Activated T-helper 1 cell treated with anti-CD3 and anti-CD28 coated beads, Interleukin-12 subunit alpha, Interleukin-12 subunit beta, Interleukin-2, Interleukin-4 antibody, amounts not matched to agents 30 ng/mL and 10 ng/mL and 1 ng/mL, durations not matched to agents 14 hours and 24 hours and 36 hours (primary cell): ENCODE measurements at regions of chr14 and their contacts with region 1.

Region 1: GRCh38 chr14:54440873-54441868 is at the start of gene CNIH1:
- DNase-seq: peak; percentile 91
- H3K4me3 Mint-ChIP-seq: peak within 1 kb of the TSS; percentile 89
- H3K27ac Mint-ChIP-seq: peak within 1 kb of the TSS; percentile 93
- H3K4me1 Mint-ChIP-seq: peaks cover 45% of the 10 kb centered on the region
- H3K27me3 Mint-ChIP-seq: peaks cover 2% of the 10 kb centered on the region
- total RNA-seq, gene CNIH1: 105 and 109 TPM in 2 replicates

Region 2: DNA sequence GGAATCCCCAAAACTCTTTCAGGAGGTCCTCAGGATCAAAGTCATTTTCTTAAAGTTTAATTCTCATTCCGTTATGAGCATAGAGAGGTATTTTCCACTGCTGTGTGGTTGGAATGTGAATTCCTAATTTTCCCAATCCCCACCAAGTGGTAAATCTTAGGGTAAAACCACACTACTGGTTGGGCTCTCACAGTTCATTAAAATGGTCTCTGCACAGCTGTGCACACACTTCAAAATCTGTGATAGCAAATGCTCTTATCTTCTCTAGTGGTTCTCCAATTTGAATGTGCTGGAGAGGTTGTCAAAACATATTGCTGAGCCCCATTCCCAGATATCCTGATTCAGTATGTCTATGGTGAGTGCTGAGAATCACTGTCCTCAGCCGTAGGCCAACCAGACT is 673.6 kb before region 1 on chr14:
- intact Hi-C with region 1: no loop called
- DNase-seq: no peak
- H3K4me3 Mint-ChIP-seq: no peak overlapping the region
- H3K27ac Mint-ChIP-seq: no peak overlapping the region
- H3K4me1 Mint-ChIP-seq: no peaks in the 10 kb centered on the region
- H3K27me3 Mint-ChIP-seq: no peaks in the 10 kb centered on the region

Region 3: GRCh38 chr14:54396493-54397335 is 44.5 kb before region 1 on chr14 and contains the start of gene CDKN3:
- intact Hi-C with region 1: loop called (anchors 1 kb)
- DNase-seq: peak; percentile 98
- H3K4me3 Mint-ChIP-seq: peak within 1 kb of the TSS; percentile 81
- H3K27ac Mint-ChIP-seq: peak within 1 kb of the TSS; percentile 85
- H3K4me1 Mint-ChIP-seq: peaks cover 16% of the 10 kb centered on the region
- H3K27me3 Mint-ChIP-seq: peaks cover 3% of the 10 kb centered on the region
- total RNA-seq, gene CDKN3: 36.5 and 39.2 TPM in 2 replicates

Region 4: GRCh38 chr14:54420013-54420809 is 21.0 kb before region 1 on chr14:
- intact Hi-C with region 1: loop called (anchors 2 kb)
- DNase-seq: no peak
- H3K4me3 Mint-ChIP-seq: no peak overlapping the region
- H3K27ac Mint-ChIP-seq: peak overlapping the region; percentile 37
- H3K4me1 Mint-ChIP-seq: peaks cover 5% of the 10 kb centered on the region
- H3K27me3 Mint-ChIP-seq: no peaks in the 10 kb centered on the region

Region 5: GRCh38 chr14:54509546-54510501 is 68.7 kb after region 1 on chr14 and contains the start of gene CGRRF1:
- intact Hi-C with region 1: loop called (anchors 1 kb)
- DNase-seq: peak; percentile 94
- H3K4me3 Mint-ChIP-seq: peak within 1 kb of the TSS; percentile 95
- H3K27ac Mint-ChIP-seq: peak within 1 kb of the TSS; percentile 83
- H3K4me1 Mint-ChIP-seq: peaks cover 40% of the 10 kb centered on the region
- H3K27me3 Mint-ChIP-seq: peaks cover 8% of the 10 kb centered on the region
- total RNA-seq, gene CGRRF1: 8.5 and 13.2 TPM in 2 replicates